HepG2 (cell line): ENCODE measurements at regions of chr2 and their contacts with region 1.

Region 1: DNA sequence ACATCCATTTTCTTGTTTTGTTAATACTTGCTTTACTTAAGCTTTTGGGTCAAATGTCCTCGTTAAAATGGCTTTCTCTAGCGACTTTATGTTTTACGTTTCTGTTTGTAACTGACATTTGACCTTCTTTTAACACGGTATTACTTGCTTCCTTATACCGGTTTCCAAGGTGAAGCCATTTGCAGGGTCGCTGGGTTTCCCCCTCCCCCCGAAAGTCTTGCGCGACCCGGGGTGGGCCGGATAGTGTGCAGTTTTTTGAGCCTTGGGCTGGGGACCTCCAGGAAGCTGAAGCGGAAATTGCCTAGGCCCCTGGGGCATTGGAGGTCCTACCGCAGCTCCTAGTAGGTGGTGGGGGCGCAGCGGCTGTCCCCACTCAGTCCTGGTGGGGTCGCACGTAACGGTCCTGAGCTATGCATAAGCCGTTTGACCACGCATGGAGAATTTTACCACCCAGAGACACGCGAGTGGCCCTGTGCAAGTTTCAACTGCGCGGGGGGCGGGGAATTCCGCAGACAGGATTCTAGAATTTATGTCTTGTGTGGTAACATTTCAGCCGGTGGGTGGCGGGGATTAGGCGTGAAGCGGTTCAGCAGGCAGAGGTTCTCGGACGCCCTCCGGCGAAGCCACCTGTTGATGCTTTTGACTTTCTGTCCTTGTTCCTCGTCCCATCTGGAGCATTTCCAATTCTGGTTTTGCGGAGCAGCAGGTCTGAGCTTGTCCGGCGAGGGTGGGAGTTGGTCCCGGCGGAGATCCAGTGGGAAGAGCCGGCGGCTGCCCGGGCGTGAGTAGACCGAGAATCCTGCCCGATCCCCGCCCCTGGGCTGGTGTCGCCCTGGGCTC is 2.4 kb downstream of the CFLAR start:
- DNase-seq: peak; percentile 88
- ATAC-seq: peak; percentile 47
- H3K4me3 ChIP-seq: peak overlapping the region; percentile 86 to 90 (median 86)
- H3K27ac ChIP-seq: peak overlapping the region; percentile 91
- H3K4me1 ChIP-seq: peaks cover 68% of the 10 kb centered on the region
- H3K27me3 ChIP-seq: no peaks in the 10 kb centered on the region; a peak in 2 of 5 replicates
- CTCF ChIP-seq: peak; percentile 78
- EP300 ChIP-seq: no peak; a peak in 1 of 4 replicates
- POLR2A ChIP-seq: peak; percentile 61 to 68
- RAD21 ChIP-seq: peak; percentile 68

Region 2: GRCh38 chr2:200888704-200889625 is 229.4 kb before region 1 on chr2 and contains the starts of genes NIF3L1 and PPIL3:
- CTCF ChIA-PET with region 1: no interaction called
- POLR2A ChIA-PET with region 1: interaction called, 31 read pairs
- in situ Hi-C with region 1: no loop called
- intact Hi-C with region 1: loop called (anchors 5 kb)
- DNase-seq: peak; percentile 99
- ATAC-seq: peak; percentile 90
- H3K4me3 ChIP-seq: peak within 1 kb of the TSS; percentile 79 to 92 (median 90)
- H3K27ac ChIP-seq: peak within 1 kb of the TSS; percentile 97
- H3K4me1 ChIP-seq: peaks cover 34% of the 10 kb centered on the region
- H3K27me3 ChIP-seq: no peaks in the 10 kb centered on the region; a peak in 2 of 5 replicates
- CTCF ChIP-seq: no peak; the same call in none of the 2 replicates
- EP300 ChIP-seq: peak; percentile 30 to 68; a peak in 2 of 4 replicates
- POLR2A ChIP-seq: peak; percentile 69 to 95
- RAD21 ChIP-seq: 0 out of 2 replicates have a peak, but pooled peaks have one; percentile 17
- total RNA-seq, gene NIF3L1: 67.9 and 98.5 TPM in 2 replicates
- total RNA-seq, gene PPIL3: 98.7 and 126 TPM in 2 replicates

Region 3: DNA sequence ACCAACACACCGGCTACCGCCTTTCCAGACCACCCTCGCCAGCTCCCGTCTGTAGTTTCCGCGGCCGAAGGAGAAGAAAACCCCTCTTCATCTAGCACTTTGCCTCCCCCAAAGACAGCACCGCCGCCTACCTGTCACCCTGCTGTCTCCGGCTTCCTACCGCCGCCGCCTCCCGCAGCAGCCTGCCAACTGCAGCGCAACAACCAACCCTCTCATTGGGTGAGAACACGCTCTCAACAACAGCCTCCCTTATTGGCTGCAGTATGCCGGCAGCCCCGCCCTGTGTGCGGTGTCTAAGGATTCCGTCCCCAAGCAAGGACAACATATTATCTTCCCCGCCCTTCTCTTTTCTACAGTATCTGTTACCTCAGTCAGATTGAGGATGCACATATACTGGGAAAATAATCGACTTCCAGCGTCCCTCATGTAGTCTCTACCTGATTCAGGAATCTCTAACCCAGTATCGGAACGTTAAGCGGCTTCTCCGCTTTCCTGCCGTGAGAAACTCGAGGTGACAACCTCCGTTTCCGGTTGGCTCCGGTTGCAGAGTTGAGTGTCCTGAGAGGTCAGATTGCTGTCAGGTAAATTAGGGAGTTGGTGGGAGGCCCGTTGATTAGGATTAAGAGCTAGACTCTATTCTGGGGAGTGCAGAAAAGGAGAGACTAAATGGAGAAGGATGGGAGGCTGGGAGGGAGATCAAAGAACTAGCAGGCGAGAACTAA is 46.7 kb before region 1 on chr2 and contains the starts of genes HYCC2 and NDUFB3:
- CTCF ChIA-PET with region 1: interaction called, 3 read pairs
- POLR2A ChIA-PET with region 1: interaction called, 19 read pairs
- in situ Hi-C with region 1: loop called (anchors 5 kb)
- intact Hi-C with region 1: loop called (anchors 1 kb)
- DNase-seq: peak; percentile 95
- ATAC-seq: peak; percentile 98
- H3K4me3 ChIP-seq: peak within 1 kb of the TSS; percentile 77 to 91 (median 91)
- H3K27ac ChIP-seq: peak within 1 kb of the TSS; percentile 88
- H3K4me1 ChIP-seq: peaks cover 34% of the 10 kb centered on the region
- H3K27me3 ChIP-seq: no peaks in the 10 kb centered on the region; a peak in 1 of 5 replicates
- CTCF ChIP-seq: peak; percentile 82
- EP300 ChIP-seq: no peak; a peak in 3 of 4 replicates
- POLR2A ChIP-seq: peak; percentile 65 to 71
- RAD21 ChIP-seq: peak; percentile 51
- total RNA-seq, gene HYCC2: 13.9 and 21.5 TPM in 2 replicates
- total RNA-seq, gene NDUFB3: 159 and 209 TPM in 2 replicates

Region 4: GRCh38 chr2:201130524-201131186 is 12.3 kb after region 1 on chr2:
- CTCF ChIA-PET with region 1: no interaction called
- POLR2A ChIA-PET with region 1: interaction called, 10 read pairs
- in situ Hi-C with region 1: no loop called
- intact Hi-C with region 1: no loop called
- DNase-seq: no peak
- ATAC-seq: no peak
- H3K4me3 ChIP-seq: no peak overlapping the region
- H3K27ac ChIP-seq: no peak overlapping the region
- H3K4me1 ChIP-seq: peaks cover 39% of the 10 kb centered on the region
- H3K27me3 ChIP-seq: no peaks in the 10 kb centered on the region
- CTCF ChIP-seq: no peak
- EP300 ChIP-seq: no peak
- POLR2A ChIP-seq: no peak
- RAD21 ChIP-seq: no peak

Region 5: GRCh38 chr2:201151127-201151981 is 33.0 kb after region 1 on chr2:
- CTCF ChIA-PET with region 1: no interaction called
- POLR2A ChIA-PET with region 1: interaction called, 75 read pairs
- in situ Hi-C with region 1: no loop called
- intact Hi-C with region 1: no loop called
- DNase-seq: peak; percentile 39
- ATAC-seq: no peak
- H3K4me3 ChIP-seq: no peak overlapping the region
- H3K27ac ChIP-seq: peak overlapping the region; percentile 91
- H3K4me1 ChIP-seq: peaks cover 39% of the 10 kb centered on the region
- H3K27me3 ChIP-seq: no peaks in the 10 kb centered on the region
- CTCF ChIP-seq: no peak
- EP300 ChIP-seq: no peak
- POLR2A ChIP-seq: no peak
- RAD21 ChIP-seq: no peak

Region 6: GRCh38 chr2:201182650-201183364 is 64.5 kb after region 1 on chr2 and contains the start of gene CASP10:
- CTCF ChIA-PET with region 1: no interaction called
- POLR2A ChIA-PET with region 1: interaction called, 14 read pairs
- in situ Hi-C with region 1: no loop called
- intact Hi-C with region 1: no loop called
- DNase-seq: peak; percentile 94
- ATAC-seq: peak; percentile 84
- H3K4me3 ChIP-seq: peak within 1 kb of the TSS; percentile 68 to 95 (median 74)
- H3K27ac ChIP-seq: peak within 1 kb of the TSS; percentile 74
- H3K4me1 ChIP-seq: peaks cover 68% of the 10 kb centered on the region
- H3K27me3 ChIP-seq: no peaks in the 10 kb centered on the region; a peak in 1 of 5 replicates
- CTCF ChIP-seq: peak; percentile 96
- EP300 ChIP-seq: 0 out of 4 replicates have a peak, but pooled peaks of 1 of the 2 experiments have one; percentile 52
- POLR2A ChIP-seq: peak; percentile 70 to 88
- RAD21 ChIP-seq: peak; percentile 83
- total RNA-seq, gene CASP10: 22.2 and 31.1 TPM in 2 replicates